ENCODE measurements at regions of chr6 and their contacts with region 1.

Region 1: GRCh38 chr6:144653885-144654505 is 368.9 kb downstream of the UTRN start:
- DNase-seq: no peak
- ATAC-seq: peak; percentile 93
- H3K4me3 Mint-ChIP-seq: peak overlapping the region; percentile 69
- H3K27ac Mint-ChIP-seq: peak overlapping the region; percentile 88
- H3K4me1 Mint-ChIP-seq: peaks cover 57% of the 10 kb centered on the region
- H3K27me3 Mint-ChIP-seq: no peaks in the 10 kb centered on the region
- CTCF ChIP-seq: no peak

Region 2: GRCh38 chr6:143465546-143465945 is 1188.4 kb before region 1 on chr6:
- CTCF ChIA-PET with region 1: no interaction called
- POLR2A ChIA-PET with region 1: no interaction called
- intact Hi-C with region 1: loop called (anchors 5 kb)
- DNase-seq: no peak
- ATAC-seq: no peak
- H3K4me3 Mint-ChIP-seq: no peak overlapping the region
- H3K27ac Mint-ChIP-seq: no peak overlapping the region
- H3K4me1 Mint-ChIP-seq: no peaks in the 10 kb centered on the region
- H3K27me3 Mint-ChIP-seq: no peaks in the 10 kb centered on the region
- CTCF ChIP-seq: no peak

Region 3: GRCh38 chr6:144667532-144668503 is 13.8 kb after region 1 on chr6:
- CTCF ChIA-PET with region 1: no interaction called
- POLR2A ChIA-PET with region 1: interaction called, 5 read pairs
- intact Hi-C with region 1: loop called (anchors 1 kb)
- DNase-seq: no peak
- ATAC-seq: peak; percentile 28
- H3K4me3 Mint-ChIP-seq: peak overlapping the region; percentile 33
- H3K27ac Mint-ChIP-seq: peak overlapping the region; percentile 77
- H3K4me1 Mint-ChIP-seq: peaks cover 64% of the 10 kb centered on the region
- H3K27me3 Mint-ChIP-seq: no peaks in the 10 kb centered on the region
- CTCF ChIP-seq: no peak

Measured in activated B cell treated with CpG ODN at 0.5 μM for 24 hours (primary cell).